CD8-positive, alpha-beta T cell (primary cell): ENCODE measurements at regions of chr22 and their contacts with region 1.

Region 1: DNA sequence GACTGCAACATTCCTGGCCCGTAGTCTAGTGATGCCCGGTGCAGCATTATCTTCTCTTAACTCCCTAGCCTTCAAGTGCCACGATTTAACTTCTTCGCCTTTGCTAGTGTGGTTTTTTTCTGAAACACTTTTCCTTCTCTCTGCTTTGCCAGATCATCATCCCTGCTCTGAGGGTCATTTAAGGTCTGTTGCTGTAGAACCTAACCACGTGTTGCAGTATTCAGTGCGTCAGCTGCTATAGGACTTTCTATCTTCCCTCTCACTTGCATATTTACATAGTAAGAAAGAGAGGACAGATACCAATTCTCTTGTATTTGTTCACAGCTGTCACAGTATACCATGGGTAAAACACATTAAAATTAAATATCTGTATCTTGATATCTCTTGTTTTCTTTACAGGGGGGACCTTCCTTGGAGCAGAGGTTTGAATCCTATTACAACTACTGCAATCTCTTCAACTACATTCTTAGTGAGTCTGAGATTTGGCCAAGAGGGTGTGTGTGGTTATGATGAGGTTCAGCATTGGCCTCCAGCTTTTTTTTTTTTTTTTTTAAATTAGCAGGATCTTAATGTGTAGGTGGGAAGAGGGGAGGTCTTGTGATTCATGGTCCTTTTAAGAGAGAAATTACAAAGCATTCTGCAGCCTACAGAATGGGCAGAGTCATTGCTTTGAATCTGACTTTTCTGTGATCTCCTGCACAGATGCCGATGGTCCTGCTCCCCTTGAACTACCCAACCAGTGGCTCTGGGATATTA is 13.5 kb downstream of the EIF3L start:
- DNase-seq: no peak
- ATAC-seq: no peak
- H3K4me3 ChIP-seq: no peak overlapping the region
- H3K4me3 Mint-ChIP-seq: no peak overlapping the region
- H3K27ac ChIP-seq: no peak overlapping the region
- H3K27ac Mint-ChIP-seq: no peak overlapping the region
- H3K4me1 ChIP-seq: no peaks in the 10 kb centered on the region
- H3K4me1 Mint-ChIP-seq: peaks cover 4% of the 10 kb centered on the region
- H3K27me3 ChIP-seq: no peaks in the 10 kb centered on the region
- H3K27me3 Mint-ChIP-seq: no peaks in the 10 kb centered on the region
- CTCF ChIP-seq: no peak

Region 2: GRCh38 chr22:37428649-37429586 is 433.8 kb before region 1 on chr22:
- CTCF ChIA-PET with region 1: no interaction called
- POLR2A ChIA-PET with region 1: no interaction called
- intact Hi-C with region 1: no loop called
- DNase-seq: peak; percentile 30 to 80 (median 65)
- ATAC-seq: peak; percentile 62
- H3K4me3 ChIP-seq: no peak overlapping the region
- H3K4me3 Mint-ChIP-seq: peak overlapping the region; percentile 22
- H3K27ac ChIP-seq: no peak overlapping the region
- H3K27ac Mint-ChIP-seq: no peak overlapping the region
- H3K4me1 ChIP-seq: peaks cover 17% of the 10 kb centered on the region
- H3K4me1 Mint-ChIP-seq: peaks cover 22% of the 10 kb centered on the region
- H3K27me3 ChIP-seq: peaks cover 17 to 25% of the 10 kb centered on the region in 2 experiments
- H3K27me3 Mint-ChIP-seq: peaks cover 54% of the 10 kb centered on the region
- CTCF ChIP-seq: peak; percentile 54

Region 3: GRCh38 chr22:37623075-37624016 is 239.4 kb before region 1 on chr22:
- CTCF ChIA-PET with region 1: no interaction called
- POLR2A ChIA-PET with region 1: no interaction called
- intact Hi-C with region 1: loop called in 1 of 2 experiments (anchors 1 kb)
- DNase-seq: peak; percentile 64 to 87 (median 79)
- ATAC-seq: peak; percentile 86
- H3K4me3 ChIP-seq: peak overlapping the region in 1 of 2 experiments; percentile 25
- H3K4me3 Mint-ChIP-seq: peak overlapping the region; percentile 68
- H3K27ac ChIP-seq: peak overlapping the region; percentile 29 to 58
- H3K27ac Mint-ChIP-seq: peak overlapping the region; percentile 95
- H3K4me1 ChIP-seq: peaks cover 53% of the 10 kb centered on the region
- H3K4me1 Mint-ChIP-seq: peaks cover 50% of the 10 kb centered on the region
- H3K27me3 ChIP-seq: no peaks in the 10 kb centered on the region
- H3K27me3 Mint-ChIP-seq: no peaks in the 10 kb centered on the region
- CTCF ChIP-seq: peak; percentile 86

Region 4: DNA sequence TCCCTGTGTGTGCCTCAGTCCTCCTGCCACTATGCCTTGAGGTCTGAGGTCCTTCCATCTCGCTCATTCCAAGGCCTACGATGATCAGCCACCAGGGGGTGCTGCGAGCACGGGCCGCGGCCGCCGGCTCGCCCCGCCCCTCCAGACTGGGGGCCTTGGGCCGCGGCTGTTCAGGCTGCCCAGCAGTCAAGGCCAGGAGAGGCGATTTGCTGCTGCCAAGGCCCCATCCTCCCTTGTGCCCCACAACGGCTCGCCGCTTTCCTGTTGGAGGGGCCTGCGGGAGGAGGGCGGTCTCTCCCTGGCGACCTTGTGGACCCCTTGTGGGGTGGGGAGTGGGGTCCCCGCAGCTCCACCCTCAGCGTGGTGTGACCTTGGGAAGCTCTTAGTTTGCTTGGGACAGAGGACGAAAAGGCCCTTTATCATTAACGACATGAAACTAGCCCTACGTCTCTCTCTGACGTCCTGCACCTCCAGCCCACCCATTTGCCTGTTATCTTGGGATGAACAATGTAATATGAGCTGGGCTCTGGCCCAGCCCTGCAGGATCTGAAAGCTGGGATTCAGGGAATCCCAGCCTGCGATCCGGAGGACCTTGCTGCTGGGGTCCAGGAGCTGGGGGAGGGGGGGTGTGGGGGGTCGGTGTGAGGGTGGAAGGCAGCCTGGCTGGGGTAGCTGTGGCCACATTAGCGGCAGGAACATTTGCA is 44.9 kb before region 1 on chr22:
- CTCF ChIA-PET with region 1: interaction called, 153 read pairs
- POLR2A ChIA-PET with region 1: interaction called, 3 read pairs
- intact Hi-C with region 1: loop called in 1 of 2 experiments (anchors 1 kb)
- DNase-seq: peak; percentile 64 to 88 (median 81)
- ATAC-seq: peak; percentile 86
- H3K4me3 ChIP-seq: peak overlapping the region; percentile 20 to 38
- H3K4me3 Mint-ChIP-seq: peak overlapping the region; percentile 65
- H3K27ac ChIP-seq: no peak overlapping the region
- H3K27ac Mint-ChIP-seq: no peak overlapping the region
- H3K4me1 ChIP-seq: peaks cover 16% of the 10 kb centered on the region
- H3K4me1 Mint-ChIP-seq: peaks cover 15% of the 10 kb centered on the region
- H3K27me3 ChIP-seq: peaks cover under 1 to 4% of the 10 kb centered on the region in 2 experiments
- H3K27me3 Mint-ChIP-seq: peaks cover 17% of the 10 kb centered on the region
- CTCF ChIP-seq: peak; percentile 86

Region 5: DNA sequence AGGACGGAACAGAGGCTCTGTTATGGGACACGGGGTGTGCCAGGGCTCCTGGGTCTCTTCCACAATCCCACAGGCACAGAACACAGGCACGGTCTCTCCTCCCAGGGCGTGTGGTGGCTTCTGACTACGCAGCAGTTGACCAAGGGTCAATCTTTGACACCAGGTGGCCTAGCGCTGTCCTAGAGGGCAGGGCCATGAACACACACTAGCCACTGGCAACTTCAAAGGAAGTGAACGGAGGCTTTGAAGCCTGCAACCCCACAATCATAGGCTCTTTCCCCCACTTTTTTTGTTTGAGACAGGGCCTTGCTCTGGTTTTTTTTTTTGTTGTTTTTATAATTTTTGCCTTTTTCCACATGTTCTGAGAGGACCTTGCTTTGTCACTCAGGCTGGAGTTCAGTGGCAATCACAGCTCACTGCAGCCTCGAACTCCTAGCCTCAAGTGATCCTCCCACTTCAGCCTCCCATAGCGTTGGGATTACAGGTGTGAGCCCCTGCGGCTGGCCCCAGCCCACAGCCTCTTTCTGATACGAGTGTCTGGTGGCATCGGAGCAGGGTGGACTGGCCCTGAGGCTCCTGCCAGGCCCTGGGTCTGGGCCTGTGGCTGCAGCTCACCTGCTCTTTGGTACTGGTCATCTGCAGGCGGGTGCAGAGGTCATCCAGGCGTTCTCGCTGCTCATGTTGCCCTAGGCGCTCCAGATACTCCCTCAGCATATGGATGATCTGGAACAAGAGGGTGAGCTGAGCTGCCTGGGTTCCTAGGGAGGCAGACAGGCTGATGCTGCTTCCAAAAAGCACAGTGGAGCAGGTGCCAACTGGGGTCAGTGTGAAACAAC is 30.5 kb before region 1 on chr22:
- CTCF ChIA-PET with region 1: interaction called, 16 read pairs
- POLR2A ChIA-PET with region 1: interaction called, 3 read pairs
- intact Hi-C with region 1: no loop called
- DNase-seq: no peak
- ATAC-seq: no peak
- H3K4me3 ChIP-seq: no peak overlapping the region
- H3K4me3 Mint-ChIP-seq: no peak overlapping the region
- H3K27ac ChIP-seq: no peak overlapping the region
- H3K27ac Mint-ChIP-seq: no peak overlapping the region
- H3K4me1 ChIP-seq: no peaks in the 10 kb centered on the region
- H3K4me1 Mint-ChIP-seq: no peaks in the 10 kb centered on the region
- H3K27me3 ChIP-seq: no peaks in the 10 kb centered on the region
- H3K27me3 Mint-ChIP-seq: no peaks in the 10 kb centered on the region
- CTCF ChIP-seq: no peak

Region 6: GRCh38 chr22:37849089-37849751 is 13.5 kb before region 1 on chr22 and contains the start of gene EIF3L:
- CTCF ChIA-PET with region 1: interaction called, 22 read pairs
- POLR2A ChIA-PET with region 1: interaction called, 3 read pairs
- intact Hi-C with region 1: loop called in 1 of 2 experiments (anchors 1 kb)
- DNase-seq: peak; percentile 73 to 93 (median 87)
- ATAC-seq: peak; percentile 67
- H3K4me3 ChIP-seq: peak within 1 kb of the TSS; percentile 63 to 89
- H3K4me3 Mint-ChIP-seq: peak within 1 kb of the TSS; percentile 84
- H3K27ac ChIP-seq: peak within 1 kb of the TSS; percentile 60 to 88
- H3K27ac Mint-ChIP-seq: peak within 1 kb of the TSS; percentile 98
- H3K4me1 ChIP-seq: peaks cover 27% of the 10 kb centered on the region
- H3K4me1 Mint-ChIP-seq: peaks cover 43% of the 10 kb centered on the region
- H3K27me3 ChIP-seq: no peaks in the 10 kb centered on the region
- H3K27me3 Mint-ChIP-seq: no peaks in the 10 kb centered on the region
- CTCF ChIP-seq: no peak
- total RNA-seq, gene EIF3L: 510 to 518 TPM